ENCODE measurements at regions of chr6 and their contacts with region 1.

Region 1: GRCh38 chr6:19444481-19444880 is 392.7 kb upstream of the ID4 start:
- DNase-seq: no peak
- ATAC-seq: no peak
- H3K4me3 Mint-ChIP-seq: no peak overlapping the region
- H3K27ac Mint-ChIP-seq: no peak overlapping the region
- H3K4me1 Mint-ChIP-seq: no peaks in the 10 kb centered on the region
- H3K27me3 Mint-ChIP-seq: no peaks in the 10 kb centered on the region
- CTCF ChIP-seq: no peak

Region 2: GRCh38 chr6:19465760-19466159 is 21.3 kb after region 1 on chr6:
- CTCF ChIA-PET with region 1: no interaction called
- POLR2A ChIA-PET with region 1: no interaction called
- intact Hi-C with region 1: no loop called
- DNase-seq: no peak
- ATAC-seq: no peak
- H3K4me3 Mint-ChIP-seq: no peak overlapping the region
- H3K27ac Mint-ChIP-seq: no peak overlapping the region
- H3K4me1 Mint-ChIP-seq: no peaks in the 10 kb centered on the region
- H3K27me3 Mint-ChIP-seq: no peaks in the 10 kb centered on the region
- CTCF ChIP-seq: no peak

Region 3: DNA sequence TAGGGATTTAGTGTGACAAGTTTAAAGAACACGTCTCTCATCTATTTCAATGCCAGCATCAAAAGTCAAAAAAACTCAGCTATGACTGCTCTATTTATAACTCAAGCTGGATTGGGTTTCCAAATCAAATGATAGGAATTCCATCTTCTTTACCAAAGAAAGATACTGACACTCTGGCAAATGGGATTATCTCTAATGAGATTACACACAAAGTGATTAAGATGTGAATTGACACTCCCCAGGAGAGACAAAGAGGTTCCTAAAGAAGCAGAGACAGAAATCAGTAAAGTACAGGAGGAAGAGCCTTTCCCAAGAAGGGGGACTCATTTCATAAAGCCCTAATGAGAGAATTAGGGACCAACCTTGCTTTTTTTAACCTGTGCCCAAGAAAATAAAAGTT is 484.8 kb after region 1 on chr6:
- CTCF ChIA-PET with region 1: no interaction called
- POLR2A ChIA-PET with region 1: interaction called, 16 read pairs
- intact Hi-C with region 1: no loop called
- DNase-seq: no peak
- ATAC-seq: no peak
- H3K4me3 Mint-ChIP-seq: no peak overlapping the region
- H3K27ac Mint-ChIP-seq: no peak overlapping the region
- H3K4me1 Mint-ChIP-seq: no peaks in the 10 kb centered on the region
- H3K27me3 Mint-ChIP-seq: no peaks in the 10 kb centered on the region
- CTCF ChIP-seq: no peak

Measured in activated B cell treated with CpG ODN at 0.5 μM for 24 hours (primary cell).